ENCODE measurements at regions of chr1 and their contacts with region 1.

Region 1: DNA sequence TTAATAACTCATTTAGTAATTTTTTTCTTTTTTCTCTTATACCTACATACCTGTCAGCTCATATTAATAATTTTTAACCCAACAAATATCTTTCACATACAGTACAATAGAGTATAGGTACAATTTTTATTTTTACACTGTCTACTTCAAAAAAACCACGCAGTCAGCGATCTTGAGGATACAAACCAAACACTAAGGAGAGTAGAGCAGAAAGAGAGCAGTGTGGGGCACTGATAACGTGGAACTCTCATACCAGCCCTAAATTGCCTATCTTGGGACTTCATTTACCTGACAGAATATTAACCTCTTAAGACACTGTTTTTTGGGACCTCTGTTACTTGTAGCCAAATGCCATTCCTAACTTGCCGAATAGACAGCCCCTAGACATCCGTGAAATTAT is 5.5 kb downstream of the TRMT1L start:
- DNase-seq: no peak
- H3K4me3 ChIP-seq: no peak overlapping the region
- H3K27ac ChIP-seq: no peak overlapping the region
- H3K4me1 ChIP-seq: peaks cover 13% of the 10 kb centered on the region
- H3K27me3 ChIP-seq: no peaks in the 10 kb centered on the region
- CTCF ChIP-seq: no peak

Region 2: GRCh38 chr1:184425449-184426218 is 725.6 kb before region 1 on chr1:
- CTCF ChIA-PET with region 1: no interaction called
- POLR2A ChIA-PET with region 1: no interaction called
- intact Hi-C with region 1: no loop called
- DNase-seq: peak; percentile 43
- H3K4me3 ChIP-seq: no peak overlapping the region
- H3K27ac ChIP-seq: no peak overlapping the region
- H3K4me1 ChIP-seq: peaks cover 22% of the 10 kb centered on the region
- H3K27me3 ChIP-seq: no peaks in the 10 kb centered on the region
- CTCF ChIP-seq: no peak

Region 3: GRCh38 chr1:184805667-184806295 is 345.4 kb before region 1 on chr1:
- CTCF ChIA-PET with region 1: no interaction called
- POLR2A ChIA-PET with region 1: no interaction called
- intact Hi-C with region 1: no loop called
- DNase-seq: peak; percentile 88
- H3K4me3 ChIP-seq: no peak overlapping the region
- H3K27ac ChIP-seq: no peak overlapping the region
- H3K4me1 ChIP-seq: no peaks in the 10 kb centered on the region
- H3K27me3 ChIP-seq: no peaks in the 10 kb centered on the region
- CTCF ChIP-seq: peak; percentile 95

Region 4: GRCh38 chr1:185377831-185378230 is 226.6 kb after region 1 on chr1:
- CTCF ChIA-PET with region 1: interaction called, 12 read pairs
- POLR2A ChIA-PET with region 1: no interaction called
- intact Hi-C with region 1: no loop called
- DNase-seq: no peak
- H3K4me3 ChIP-seq: no peak overlapping the region
- H3K27ac ChIP-seq: no peak overlapping the region
- H3K4me1 ChIP-seq: no peaks in the 10 kb centered on the region
- H3K27me3 ChIP-seq: no peaks in the 10 kb centered on the region
- CTCF ChIP-seq: no peak

Measured in A673 (cell line).